GM10248 (cell line): ENCODE measurements at regions of chr16 and their contacts with region 1.

Region 1: DNA sequence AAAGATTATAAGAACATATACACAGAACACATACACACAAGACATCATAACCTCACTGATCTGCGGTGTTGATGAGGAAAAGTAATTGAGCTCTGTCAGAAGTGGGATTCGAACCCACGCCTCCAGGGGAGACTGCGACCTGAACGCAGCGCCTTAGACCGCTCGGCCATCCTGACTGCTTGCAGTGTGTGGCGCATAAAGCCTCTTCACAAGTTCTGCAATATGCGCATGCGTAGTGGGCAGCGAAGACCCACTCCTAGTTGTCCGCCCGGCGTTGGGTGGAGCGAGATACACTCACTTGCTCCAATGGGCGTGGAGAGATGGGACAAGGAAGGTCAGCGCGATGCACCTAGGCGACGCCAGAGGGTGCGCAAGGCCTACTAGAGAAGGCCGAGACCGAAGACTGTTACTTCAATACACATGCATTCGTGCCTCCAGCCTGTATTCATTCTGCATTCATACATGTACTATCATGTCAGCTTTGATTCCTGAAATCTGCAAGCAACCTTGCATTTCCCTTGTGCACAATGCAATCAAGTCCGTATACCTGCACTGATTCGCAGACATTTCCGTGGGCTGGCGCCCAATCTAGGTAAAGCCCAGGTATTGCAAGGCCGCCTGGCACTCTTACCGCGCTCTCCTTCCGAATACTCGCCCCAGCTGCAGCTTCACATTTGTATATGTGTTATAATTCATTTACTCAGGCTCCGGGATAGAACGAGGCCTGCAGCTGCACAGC is 16.1 kb upstream of the PLLP start:
- DNase-seq: peak; percentile 95
- CTCF ChIP-seq: peak; percentile 96

Region 2: GRCh38 chr16:57289391-57290257 is 10.9 kb before region 1 on chr16:
- CTCF ChIA-PET with region 1: interaction called, 13 read pairs
- POLR2A ChIA-PET with region 1: no interaction called
- DNase-seq: no peak
- CTCF ChIP-seq: no peak